Activated CD8-positive, alpha-beta T cell treated with anti-CD3 and anti-CD28 coated beads for 36 hours (primary cell): ENCODE measurements at regions of chr1 and their contacts with region 1.

Region 1: DNA sequence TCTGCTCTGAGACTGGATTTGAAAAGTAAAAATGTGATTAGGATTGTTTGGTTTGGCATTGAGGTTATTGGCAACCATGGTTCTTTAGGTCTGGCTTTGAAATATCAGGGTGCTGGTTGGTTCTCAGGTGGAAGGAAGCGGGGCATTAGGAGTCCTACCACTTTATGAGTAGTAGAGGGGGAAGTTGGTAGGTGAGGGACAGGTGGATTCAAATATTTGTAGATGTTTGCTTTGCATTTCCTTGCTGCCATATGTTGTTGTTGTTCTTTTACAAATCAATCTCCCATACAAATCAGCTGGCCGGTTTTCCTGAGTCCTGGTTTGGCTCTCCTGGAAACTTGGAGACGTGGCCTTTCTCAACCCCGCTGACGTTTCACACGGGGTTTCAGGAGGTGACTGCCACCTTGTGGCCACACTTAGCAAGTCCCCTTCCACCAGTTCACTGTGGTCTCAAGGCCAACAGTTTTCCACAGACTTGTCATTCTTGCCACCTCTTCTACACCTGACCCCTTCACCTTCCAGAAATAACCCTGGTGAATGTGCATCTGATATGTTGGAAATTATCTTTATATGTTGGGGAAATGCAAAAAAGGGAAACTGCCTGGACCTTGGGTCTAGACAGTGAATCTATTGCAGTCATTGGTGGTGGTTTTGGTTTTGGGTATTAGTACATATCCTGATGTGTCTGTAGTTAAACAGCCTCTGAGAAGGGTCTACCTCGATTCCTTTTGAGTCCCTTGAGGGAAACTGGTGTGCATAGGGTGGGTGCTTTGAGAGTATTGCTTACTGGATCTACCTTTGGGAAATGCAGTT is 127.0 kb upstream of the KIAA0040 start:
- DNase-seq: peak; percentile 76
- ATAC-seq: peak; percentile 90
- H3K4me3 Mint-ChIP-seq: no peak overlapping the region
- H3K27ac Mint-ChIP-seq: no peak overlapping the region
- H3K4me1 Mint-ChIP-seq: peaks cover 15% of the 10 kb centered on the region
- H3K27me3 Mint-ChIP-seq: no peaks in the 10 kb centered on the region
- CTCF ChIP-seq: peak; percentile 76

Region 2: DNA sequence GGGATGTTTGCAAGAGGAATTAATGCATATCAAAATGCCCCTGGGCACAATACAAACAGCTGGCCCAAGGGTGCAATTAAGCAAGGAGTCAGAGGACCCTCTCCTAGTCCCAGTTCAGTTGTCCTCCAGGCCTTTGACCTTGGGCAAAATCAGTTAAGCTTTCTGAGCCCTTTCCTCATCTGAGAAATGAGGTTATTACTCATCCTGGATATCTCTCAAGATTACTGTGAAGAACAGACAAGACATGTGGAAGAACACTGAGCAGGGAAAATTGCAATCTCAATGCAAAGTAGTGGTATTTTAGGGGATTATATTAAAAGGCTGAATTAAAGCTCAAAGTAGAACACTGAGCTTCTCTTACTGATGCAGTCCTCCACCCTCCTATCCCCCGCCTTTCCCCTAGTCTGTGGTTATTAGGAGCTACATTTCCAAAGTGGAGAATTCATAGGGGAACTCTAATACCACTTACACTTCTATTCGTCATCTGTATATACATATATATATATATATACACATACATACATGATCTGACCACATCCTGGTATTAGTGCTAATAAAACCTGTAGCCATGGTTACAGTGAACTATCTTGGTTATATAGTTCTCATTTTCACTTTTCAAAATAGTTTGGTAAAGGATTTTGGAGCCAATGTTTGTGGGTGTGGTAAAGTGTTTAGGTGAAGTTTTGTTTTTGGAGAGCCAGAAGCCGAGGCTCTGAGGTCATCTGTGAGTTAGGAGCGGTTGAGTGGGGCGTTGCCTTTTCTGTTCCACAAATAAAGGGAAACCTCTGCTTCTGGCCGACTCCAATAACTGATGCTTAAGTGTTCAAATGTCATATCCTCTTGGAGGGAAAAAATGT is 145.1 kb before region 1 on chr1:
- CTCF ChIA-PET with region 1: interaction called, 14 read pairs
- POLR2A ChIA-PET with region 1: interaction called, 4 read pairs
- intact Hi-C with region 1: no loop called
- DNase-seq: no peak
- ATAC-seq: no peak
- H3K4me3 Mint-ChIP-seq: no peak overlapping the region
- H3K27ac Mint-ChIP-seq: no peak overlapping the region
- H3K4me1 Mint-ChIP-seq: peaks cover 45% of the 10 kb centered on the region
- H3K27me3 Mint-ChIP-seq: no peaks in the 10 kb centered on the region
- CTCF ChIP-seq: no peak

Region 3: GRCh38 chr1:175208773-175209492 is 110.7 kb before region 1 on chr1:
- CTCF ChIA-PET with region 1: interaction called, 18 read pairs
- POLR2A ChIA-PET with region 1: no interaction called
- intact Hi-C with region 1: no loop called
- DNase-seq: peak; percentile 70
- ATAC-seq: peak; percentile 82
- H3K4me3 Mint-ChIP-seq: peak overlapping the region; percentile 65
- H3K27ac Mint-ChIP-seq: peak overlapping the region; percentile 96
- H3K4me1 Mint-ChIP-seq: peaks cover 53% of the 10 kb centered on the region
- H3K27me3 Mint-ChIP-seq: no peaks in the 10 kb centered on the region
- CTCF ChIP-seq: no peak

Region 4: GRCh38 chr1:175294179-175294756 is 25.4 kb before region 1 on chr1:
- CTCF ChIA-PET with region 1: interaction called, 17 read pairs
- POLR2A ChIA-PET with region 1: no interaction called
- intact Hi-C with region 1: no loop called
- DNase-seq: no peak
- ATAC-seq: no peak
- H3K4me3 Mint-ChIP-seq: no peak overlapping the region
- H3K27ac Mint-ChIP-seq: no peak overlapping the region
- H3K4me1 Mint-ChIP-seq: peaks cover 23% of the 10 kb centered on the region
- H3K27me3 Mint-ChIP-seq: peaks cover 3% of the 10 kb centered on the region
- CTCF ChIP-seq: no peak

Region 5: DNA sequence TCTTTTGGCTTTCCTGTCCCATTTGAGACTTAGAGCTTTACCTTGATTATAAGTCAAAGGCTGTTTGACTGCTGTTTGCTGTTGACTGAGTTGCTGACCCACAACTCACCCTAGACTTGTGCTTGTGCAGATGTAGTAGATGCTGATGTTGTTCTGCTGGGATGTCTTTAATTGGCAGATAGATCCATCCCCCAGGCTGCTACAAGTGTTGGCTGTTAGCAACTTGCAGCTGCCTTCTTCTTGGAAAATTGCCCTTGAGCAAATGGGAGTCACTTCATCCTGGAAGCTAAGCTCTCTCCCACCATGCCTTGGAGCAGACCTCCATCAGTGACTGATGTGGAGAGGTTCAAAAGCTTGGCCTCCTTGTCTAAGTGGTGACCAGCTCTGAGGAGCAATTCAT is 12.3 kb after region 1 on chr1:
- CTCF ChIA-PET with region 1: interaction called, 11 read pairs
- POLR2A ChIA-PET with region 1: no interaction called
- intact Hi-C with region 1: no loop called
- DNase-seq: no peak
- ATAC-seq: no peak
- H3K4me3 Mint-ChIP-seq: no peak overlapping the region
- H3K27ac Mint-ChIP-seq: no peak overlapping the region
- H3K4me1 Mint-ChIP-seq: no peaks in the 10 kb centered on the region
- H3K27me3 Mint-ChIP-seq: peaks cover 3% of the 10 kb centered on the region
- CTCF ChIP-seq: no peak